Vagina (tissue), 2 donors: ENCODE measurements at regions of chr14 and their contacts with region 1.

Region 1: GRCh38 chr14:78967110-78967809 is 797.1 kb downstream of the NRXN3 start:
- DNase-seq: no peak
- H3K4me3 ChIP-seq: no peak overlapping the region
- H3K27ac ChIP-seq: no peak overlapping the region
- H3K4me1 ChIP-seq: no peaks in the 10 kb centered on the region
- H3K27me3 ChIP-seq: no peaks in the 10 kb centered on the region
- CTCF ChIP-seq: no peak
- POLR2A ChIP-seq: no peak

Region 2: DNA sequence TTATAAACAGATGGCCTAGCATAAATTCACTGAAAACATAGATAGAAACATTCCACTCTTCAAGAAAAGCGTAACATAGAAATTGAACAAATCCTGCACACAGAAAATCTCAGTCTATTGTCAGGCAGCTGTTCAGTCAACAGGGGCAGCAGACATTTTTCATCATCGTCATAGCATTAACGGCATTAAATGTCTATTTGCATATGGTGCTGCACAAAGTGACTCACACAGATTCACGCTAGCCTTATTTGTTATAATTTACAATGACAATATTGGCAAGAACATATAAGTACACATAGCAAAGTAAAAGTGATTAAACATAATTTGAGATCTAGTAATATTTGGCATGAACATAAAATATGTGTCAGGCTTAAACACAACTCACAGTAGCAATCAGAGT is 1878.6 kb after region 1 on chr14:
- intact Hi-C with region 1: loop called (anchors 5 kb)
- DNase-seq: no peak
- H3K4me3 ChIP-seq: no peak overlapping the region
- H3K27ac ChIP-seq: no peak overlapping the region
- H3K4me1 ChIP-seq: no peaks in the 10 kb centered on the region
- H3K27me3 ChIP-seq: no peaks in the 10 kb centered on the region
- CTCF ChIP-seq: no peak
- POLR2A ChIP-seq: no peak